ENCODE measurements at regions of chr4 and their contacts with region 1.

Region 1: GRCh38 chr4:108109997-108110416 is 58.7 kb downstream of the LEF1 start:
- DNase-seq: no peak
- H3K4me3 Mint-ChIP-seq: peak overlapping the region; percentile 9
- H3K27ac Mint-ChIP-seq: peak overlapping the region; percentile 68
- H3K4me1 Mint-ChIP-seq: peaks cover 91% of the 10 kb centered on the region
- H3K27me3 Mint-ChIP-seq: no peaks in the 10 kb centered on the region

Region 2: DNA sequence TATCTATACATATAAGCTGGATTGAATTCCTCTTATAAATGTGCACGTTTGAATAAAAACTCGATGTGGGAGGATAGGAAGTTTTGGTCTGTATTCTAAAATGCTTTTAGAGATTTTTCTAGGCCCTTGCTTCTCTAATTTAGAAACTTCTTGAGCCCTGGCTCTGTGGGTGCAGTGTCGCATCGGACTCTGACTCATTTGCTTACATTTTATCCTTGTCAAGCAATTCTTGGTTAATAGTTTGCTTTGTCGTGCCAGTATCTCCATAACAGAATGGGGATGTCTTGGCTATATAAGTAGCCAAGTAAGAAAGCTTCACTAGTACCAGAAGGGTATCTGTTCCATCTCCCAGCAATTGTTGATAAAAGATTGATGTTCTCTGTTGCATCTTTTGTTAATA is 274.6 kb before region 1 on chr4:
- CTCF ChIA-PET with region 1: no interaction called
- POLR2A ChIA-PET with region 1: no interaction called
- intact Hi-C with region 1: no loop called
- DNase-seq: no peak
- H3K4me3 Mint-ChIP-seq: no peak overlapping the region
- H3K27ac Mint-ChIP-seq: no peak overlapping the region
- H3K4me1 Mint-ChIP-seq: no peaks in the 10 kb centered on the region
- H3K27me3 Mint-ChIP-seq: peaks cover 8% of the 10 kb centered on the region

Region 3: DNA sequence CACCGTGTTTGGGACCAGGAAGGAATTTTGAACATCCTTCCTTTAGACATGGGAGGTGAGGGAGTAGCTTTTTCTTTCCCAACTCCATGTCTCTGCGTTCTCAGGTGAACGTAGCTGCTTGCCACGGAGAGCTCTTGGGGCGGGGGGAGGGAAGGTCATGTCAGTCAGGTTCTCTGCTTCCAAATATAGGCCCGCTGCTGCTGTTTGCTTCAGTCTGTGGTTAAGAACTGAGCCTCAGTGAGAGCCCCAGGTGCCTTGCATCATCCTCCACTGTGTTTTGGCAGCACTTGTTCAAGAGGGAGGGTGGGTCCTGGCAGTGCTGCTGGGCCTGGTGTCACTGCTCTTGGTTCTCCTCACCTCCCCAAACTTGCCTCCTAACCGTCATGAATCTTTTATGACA is 73.8 kb before region 1 on chr4:
- CTCF ChIA-PET with region 1: no interaction called
- POLR2A ChIA-PET with region 1: interaction called, 10 read pairs
- intact Hi-C with region 1: loop called (anchors 2 kb)
- DNase-seq: peak; percentile 76
- H3K4me3 Mint-ChIP-seq: peak overlapping the region; percentile 35
- H3K27ac Mint-ChIP-seq: peak overlapping the region; percentile 86
- H3K4me1 Mint-ChIP-seq: peaks cover 39% of the 10 kb centered on the region
- H3K27me3 Mint-ChIP-seq: no peaks in the 10 kb centered on the region

Region 4: GRCh38 chr4:108080747-108081146 is 29.3 kb before region 1 on chr4:
- CTCF ChIA-PET with region 1: no interaction called
- POLR2A ChIA-PET with region 1: no interaction called
- intact Hi-C with region 1: loop called (anchors 1 kb)
- DNase-seq: peak; percentile 58
- H3K4me3 Mint-ChIP-seq: peak overlapping the region; percentile 59
- H3K27ac Mint-ChIP-seq: peak overlapping the region; percentile 83
- H3K4me1 Mint-ChIP-seq: peaks cover 55% of the 10 kb centered on the region
- H3K27me3 Mint-ChIP-seq: no peaks in the 10 kb centered on the region

Region 5: DNA sequence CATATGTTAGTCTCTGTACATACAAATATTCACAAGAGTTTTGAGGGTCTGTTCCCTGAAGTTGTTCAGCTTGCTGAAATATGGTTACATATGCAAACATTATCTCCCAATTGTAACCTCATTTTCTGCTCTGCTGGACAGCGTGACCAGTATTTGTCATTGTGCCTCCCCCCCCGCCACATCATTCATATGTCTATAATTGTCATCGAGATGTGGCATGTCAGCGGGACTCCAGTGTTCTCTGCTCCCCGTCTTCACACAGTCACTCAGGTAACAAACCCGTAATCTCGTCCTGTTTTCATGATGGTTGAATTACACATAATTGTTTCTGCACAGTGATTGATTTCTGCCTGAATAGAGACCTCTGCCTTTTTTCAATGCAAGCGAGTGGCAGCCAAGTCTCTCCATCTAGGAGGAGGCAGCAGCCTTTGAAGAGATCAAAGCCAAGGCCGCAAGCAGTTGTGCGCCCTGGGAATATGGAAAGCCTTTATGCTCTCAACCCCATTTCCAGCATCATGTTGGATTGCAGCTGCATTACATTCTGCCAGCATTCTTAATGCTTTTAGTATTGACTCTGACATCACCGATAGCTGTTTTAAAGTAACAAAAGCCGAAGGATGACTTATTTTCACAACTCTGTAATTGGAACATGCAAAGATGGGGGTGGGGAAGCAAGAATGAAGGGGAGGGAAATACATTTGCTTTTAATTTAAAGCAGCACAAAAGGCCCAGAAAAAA is 31.4 kb after region 1 on chr4:
- CTCF ChIA-PET with region 1: interaction called, 6 read pairs
- POLR2A ChIA-PET with region 1: interaction called, 11 read pairs
- intact Hi-C with region 1: loop called (anchors 2 kb)
- DNase-seq: peak; percentile 67
- H3K4me3 Mint-ChIP-seq: peak overlapping the region; percentile 64
- H3K27ac Mint-ChIP-seq: peak overlapping the region; percentile 88
- H3K4me1 Mint-ChIP-seq: peaks cover 90% of the 10 kb centered on the region
- H3K27me3 Mint-ChIP-seq: no peaks in the 10 kb centered on the region

Region 6: DNA sequence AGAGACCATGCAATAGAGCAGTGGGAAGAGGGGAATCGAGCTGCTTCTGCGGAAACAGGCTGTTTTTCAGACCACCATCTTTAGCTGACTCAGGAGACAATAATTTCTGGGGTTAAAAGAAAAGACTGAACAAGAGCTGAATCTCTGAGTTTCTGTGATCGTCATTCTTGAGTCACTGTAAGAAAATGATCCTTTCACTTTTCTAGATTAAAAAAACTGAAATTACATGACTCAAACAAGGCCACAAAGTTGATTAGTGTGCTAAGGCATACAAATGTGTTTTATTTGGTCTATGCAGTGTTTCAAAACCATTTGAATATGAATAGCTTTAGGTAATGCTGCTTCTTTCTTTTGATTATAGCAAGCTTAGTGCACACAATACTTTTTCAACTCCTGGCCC is 316.0 kb after region 1 on chr4:
- CTCF ChIA-PET with region 1: no interaction called
- POLR2A ChIA-PET with region 1: no interaction called
- intact Hi-C with region 1: loop called (anchors 2 kb)
- DNase-seq: no peak
- H3K4me3 Mint-ChIP-seq: no peak overlapping the region
- H3K27ac Mint-ChIP-seq: no peak overlapping the region
- H3K4me1 Mint-ChIP-seq: peaks cover 22% of the 10 kb centered on the region
- H3K27me3 Mint-ChIP-seq: peaks cover 12% of the 10 kb centered on the region

Measured in activated CD4-positive, alpha-beta memory T cell treated with anti-CD3 and anti-CD28 coated beads for 36 hours (primary cell).